ENCODE measurements at regions of chr6 and their contacts with region 1.

Region 1: DNA sequence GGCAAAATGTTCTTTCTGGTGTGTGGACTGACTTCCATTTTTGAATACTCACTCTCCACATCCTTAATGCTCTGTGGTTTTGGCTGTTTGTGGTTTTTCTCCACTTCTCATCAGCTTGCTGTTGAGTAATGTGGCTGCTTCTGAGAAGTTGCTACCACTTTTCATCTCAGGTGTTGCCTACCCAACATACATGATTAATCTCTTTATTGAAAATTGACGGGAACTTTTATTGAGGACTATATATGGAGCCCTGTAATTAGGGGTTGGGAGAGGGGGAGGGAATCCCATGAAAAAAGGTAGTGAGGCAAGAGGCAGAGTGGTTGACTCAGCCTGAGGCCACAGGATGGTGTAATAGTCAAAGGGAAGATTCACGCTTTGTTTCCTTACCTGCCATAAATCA is 17.6 kb downstream of the IL22RA2 start:
- DNase-seq: no peak

Region 2: DNA sequence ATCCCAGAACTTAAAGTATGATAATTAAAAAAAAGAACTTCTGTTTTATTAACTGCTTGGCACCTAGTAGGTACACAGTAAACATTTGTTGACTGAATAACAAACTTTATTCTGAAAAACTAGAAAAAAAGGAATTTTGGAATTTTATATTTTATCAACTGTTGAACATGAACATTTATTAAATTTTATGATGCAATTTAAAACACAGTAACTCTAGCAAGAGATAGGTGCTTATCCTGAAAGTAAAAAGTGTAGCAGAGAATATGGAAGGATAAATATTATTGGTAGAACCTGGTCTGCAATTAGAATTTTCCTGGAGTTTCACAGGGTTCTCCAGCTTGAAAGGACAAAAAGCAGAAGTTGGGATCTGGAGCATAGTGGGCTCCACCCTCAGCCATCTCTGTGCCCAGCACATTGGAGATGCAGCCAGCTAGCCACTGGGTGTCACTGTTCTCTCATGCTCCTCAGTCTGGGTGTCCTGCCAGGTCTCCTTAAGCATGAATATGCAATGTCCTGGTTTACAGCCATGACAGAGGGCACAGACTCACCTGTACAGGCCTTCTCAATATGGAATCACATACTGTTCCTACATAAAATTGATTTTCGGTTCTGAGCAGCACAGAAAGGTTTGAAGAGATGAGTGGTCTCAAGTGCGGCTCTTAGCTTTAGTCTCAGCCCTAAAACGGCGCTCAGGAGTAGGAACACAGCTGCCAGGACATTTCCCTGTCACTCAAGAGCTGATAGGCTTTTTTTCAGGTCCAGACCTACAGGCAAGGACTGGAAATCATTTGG is 79.4 kb before region 1 on chr6:
- intact Hi-C with region 1: loop called in 1 of 2 experiments (anchors 2 kb)
- DNase-seq: peak; percentile 86